ENCODE measurements at regions of chr4 and their contacts with region 1.

Region 1: GRCh38 chr4:148469938-148470337 is 27.7 kb upstream of the NR3C2 start:
- DNase-seq: no peak
- H3K4me3 ChIP-seq: no peak overlapping the region
- H3K4me3 Mint-ChIP-seq: no peak overlapping the region
- H3K27ac ChIP-seq: no peak overlapping the region
- H3K27ac Mint-ChIP-seq: no peak overlapping the region
- H3K4me1 ChIP-seq: no peaks in the 10 kb centered on the region
- H3K4me1 Mint-ChIP-seq: no peaks in the 10 kb centered on the region
- H3K27me3 ChIP-seq: no peaks in the 10 kb centered on the region
- H3K27me3 Mint-ChIP-seq: peaks cover 0 to 2% (median 2%) of the 10 kb centered on the region in 3 donors
- CTCF ChIP-seq: no peak

Region 2: DNA sequence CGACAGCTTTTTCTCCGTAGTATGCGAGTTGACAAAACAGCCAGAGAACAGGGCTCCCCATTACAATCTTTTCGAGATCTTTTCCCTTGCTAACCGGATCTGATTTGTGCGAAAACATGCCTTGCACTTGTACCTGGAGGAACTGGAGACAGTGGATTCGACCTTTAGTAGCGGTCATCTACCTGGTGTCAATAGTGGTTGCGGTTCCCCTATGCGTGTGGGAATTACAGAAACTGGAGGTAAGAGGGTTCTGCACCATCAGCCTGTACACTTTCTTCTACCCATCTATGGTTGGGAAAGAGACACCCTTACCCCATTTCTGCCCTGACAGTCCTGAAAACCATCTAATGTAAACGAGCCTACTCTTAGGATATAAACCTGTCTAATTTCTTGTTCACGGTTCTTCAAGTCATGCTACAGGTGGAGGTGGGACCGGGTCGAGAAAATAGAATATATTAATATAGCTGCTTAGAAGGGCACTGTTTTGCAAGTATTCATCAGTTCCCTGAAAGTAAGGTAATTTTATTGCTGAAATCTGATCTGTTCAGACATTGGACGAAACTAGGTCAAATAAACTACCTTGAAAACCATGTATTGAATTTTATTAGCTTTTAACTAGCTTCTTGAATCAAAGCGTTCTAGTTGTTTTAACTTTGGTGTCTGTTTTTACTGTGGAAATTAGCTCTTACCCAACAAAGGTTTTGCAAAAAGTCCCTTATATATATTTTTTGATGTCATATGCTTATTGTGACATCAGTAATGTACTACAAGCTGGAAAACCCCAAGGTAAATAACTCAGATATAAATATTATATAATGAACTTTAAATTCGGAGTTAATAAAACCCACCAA is 851.9 kb before region 1 on chr4:
- intact Hi-C with region 1: no loop called
- DNase-seq: peak in 2 of 3 donors; percentile 3 to 30
- H3K4me3 ChIP-seq: peak overlapping the region; percentile 66 to 89 (median 83)
- H3K4me3 Mint-ChIP-seq: peak overlapping the region; percentile 99 to 100
- H3K27ac ChIP-seq: peak overlapping the region; percentile 87 to 97
- H3K27ac Mint-ChIP-seq: peak overlapping the region; percentile 97 to 100 (median 99)
- H3K4me1 ChIP-seq: peaks cover 23 to 34% of the 10 kb centered on the region in 2 donors
- H3K4me1 Mint-ChIP-seq: peaks cover 33% of the 10 kb centered on the region
- H3K27me3 ChIP-seq: peaks cover 0 to 10% of the 10 kb centered on the region in 2 donors
- H3K27me3 Mint-ChIP-seq: peaks cover 2 to 8% (median 2%) of the 10 kb centered on the region in 3 donors
- CTCF ChIP-seq: no peak

Region 3: GRCh38 chr4:148415500-148415899 is 54.4 kb before region 1 on chr4:
- intact Hi-C with region 1: loop called in 1 of 2 experiments (anchors 10 kb)
- DNase-seq: no peak
- H3K4me3 ChIP-seq: no peak overlapping the region
- H3K4me3 Mint-ChIP-seq: no peak overlapping the region
- H3K27ac ChIP-seq: no peak overlapping the region
- H3K27ac Mint-ChIP-seq: no peak overlapping the region
- H3K4me1 ChIP-seq: no peaks in the 10 kb centered on the region
- H3K4me1 Mint-ChIP-seq: peaks cover 1% of the 10 kb centered on the region
- H3K27me3 ChIP-seq: no peaks in the 10 kb centered on the region
- H3K27me3 Mint-ChIP-seq: peaks cover 0 to 4% (median 0%) of the 10 kb centered on the region in 3 donors
- CTCF ChIP-seq: no peak

Measured in CD14-positive monocyte (primary cell).